Mammary epithelial cell (primary cell): ENCODE measurements at regions of chr5 and their contacts with region 1.

Region 1: GRCh38 chr5:175895215-175896102 is 24.1 kb downstream of the CPLX2 start:
- DNase-seq: peak; percentile 83
- H3K4me3 ChIP-seq: no peak overlapping the region
- H3K27ac ChIP-seq: no peak overlapping the region
- H3K4me1 ChIP-seq: peaks cover 9% of the 10 kb centered on the region
- H3K27me3 ChIP-seq: no peaks in the 10 kb centered on the region
- CTCF ChIP-seq: no peak

Region 2: GRCh38 chr5:175746851-175747250 is 148.6 kb before region 1 on chr5:
- CTCF ChIA-PET with region 1: no interaction called
- dilution Hi-C with region 1: no loop called
- in situ Hi-C with region 1: loop called in 1 of 2 experiments (anchors 25 kb)
- intact Hi-C with region 1: loop called (anchors 5 kb)
- DNase-seq: peak; percentile 28
- H3K4me3 ChIP-seq: no peak overlapping the region
- H3K27ac ChIP-seq: no peak overlapping the region
- H3K4me1 ChIP-seq: peaks cover 10% of the 10 kb centered on the region
- H3K27me3 ChIP-seq: no peaks in the 10 kb centered on the region
- CTCF ChIP-seq: no peak